IMR-90 (cell line): ENCODE measurements at regions of chr4 and their contacts with region 1.

Region 1: GRCh38 chr4:20603671-20604293 is 96.5 kb upstream of the PACRGL start:
- DNase-seq: peak; percentile 83
- ATAC-seq: peak; percentile 86
- H3K4me3 ChIP-seq: no peak overlapping the region
- H3K27ac ChIP-seq: no peak overlapping the region
- H3K4me1 ChIP-seq: no peaks in the 10 kb centered on the region
- H3K27me3 ChIP-seq: no peaks in the 10 kb centered on the region
- CTCF ChIP-seq: no peak
- POLR2A ChIP-seq: no peak
- RAD21 ChIP-seq: no peak

Region 2: GRCh38 chr4:20574986-20575385 is 28.8 kb before region 1 on chr4:
- CTCF ChIA-PET with region 1: no interaction called
- POLR2A ChIA-PET with region 1: no interaction called
- dilution Hi-C with region 1: no loop called
- in situ Hi-C with region 1: no loop called
- intact Hi-C with region 1: loop called (anchors 2 kb)
- DNase-seq: no peak
- ATAC-seq: no peak; the same call in 1 of the 2 replicates
- H3K4me3 ChIP-seq: no peak overlapping the region
- H3K27ac ChIP-seq: no peak overlapping the region
- H3K4me1 ChIP-seq: no peaks in the 10 kb centered on the region
- H3K27me3 ChIP-seq: no peaks in the 10 kb centered on the region
- CTCF ChIP-seq: no peak
- POLR2A ChIP-seq: no peak
- RAD21 ChIP-seq: no peak